Dorsolateral prefrontal cortex (tissue), 120 donors: ENCODE measurements at regions of chr15 and their contacts with region 1.

Region 1: DNA sequence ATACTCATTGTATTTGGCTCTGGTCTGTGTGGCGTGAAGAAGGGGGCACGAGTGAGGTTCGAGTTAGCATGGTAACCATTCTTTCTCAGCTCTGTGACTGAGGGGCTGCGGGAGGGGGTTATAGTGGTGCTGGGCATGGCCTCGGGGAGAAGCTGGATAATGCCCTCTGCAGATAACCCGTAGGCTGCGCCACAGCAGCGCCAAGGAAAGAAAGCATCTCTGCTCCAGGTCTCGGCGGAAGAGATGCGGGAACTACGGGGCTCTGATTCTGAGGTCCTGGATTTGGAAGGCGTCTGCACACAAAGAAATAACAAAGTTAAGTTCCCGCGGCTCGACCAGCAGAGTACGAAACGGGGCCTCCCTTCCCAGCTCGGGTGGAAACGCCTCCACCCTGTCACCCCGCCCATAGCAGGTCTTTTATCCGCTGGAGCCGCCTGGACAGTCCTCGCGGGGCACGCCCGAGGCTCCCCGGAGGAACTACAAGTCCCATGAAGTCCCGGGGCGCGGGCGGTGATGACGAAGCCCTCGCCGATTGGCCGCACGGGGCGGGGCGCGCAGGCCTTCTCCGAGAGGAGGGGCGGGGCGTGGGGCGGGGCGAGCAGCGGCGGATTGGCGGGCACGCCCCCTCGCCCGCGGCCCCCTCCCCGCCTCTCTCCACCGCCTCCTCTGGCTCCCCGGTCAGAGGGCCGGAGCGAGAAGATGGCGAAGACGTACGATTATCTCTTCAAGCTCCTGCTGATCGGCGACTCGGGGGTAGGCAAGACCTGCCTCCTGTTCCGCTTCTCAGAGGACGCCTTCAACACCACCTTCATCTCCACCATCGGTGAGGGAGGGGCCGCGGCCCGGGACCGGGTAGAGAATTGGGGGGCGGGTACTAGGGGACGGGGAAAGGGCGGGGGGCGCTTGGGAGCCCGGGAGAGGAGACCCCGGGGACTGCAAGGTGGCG is at the start of gene RAB8B:
- DNase-seq: peak; percentile 97 to 99 (median 98)
- H3K4me3 ChIP-seq: peak within 1 kb of the TSS; percentile 50 to 87 (median 75)
- H3K27ac ChIP-seq: peak within 1 kb of the TSS in 58 of 59 donors; percentile 3 to 93 (median 82)
- H3K27me3 ChIP-seq: no peaks in the 10 kb centered on the region
- CTCF ChIP-seq: peak in 27 of 56 donors; percentile 5 to 50 (median 30)
- total RNA-seq, gene RAB8B: 22.5 to 54.3 (median 36.0) TPM

Region 2: DNA sequence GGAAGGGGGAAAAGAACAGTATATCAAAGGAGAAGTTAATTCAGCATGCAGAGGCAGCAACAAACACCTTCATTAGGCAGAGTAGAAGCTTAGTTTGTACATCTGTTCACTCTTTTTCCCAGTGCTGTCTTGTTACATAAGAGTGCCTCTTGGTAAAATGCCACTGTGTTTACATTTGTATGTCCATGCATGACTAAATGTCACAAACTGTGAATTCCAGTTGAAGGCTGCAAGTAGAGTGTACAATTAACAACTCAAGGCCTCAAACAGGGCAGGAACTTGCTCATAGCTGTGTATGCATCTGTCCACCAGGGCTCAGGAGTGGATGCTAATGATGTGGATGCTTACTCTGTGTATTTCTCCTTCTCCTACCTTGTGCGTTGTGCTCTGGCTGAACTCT is 360.8 kb before region 1 on chr15:
- intact Hi-C with region 1: no loop called
- DNase-seq: no peak
- H3K4me3 ChIP-seq: no peak overlapping the region
- H3K27ac ChIP-seq: peak overlapping the region in 3 of 59 donors; percentile 8 to 31 (median 15)
- H3K27me3 ChIP-seq: no peaks in the 10 kb centered on the region
- CTCF ChIP-seq: no peak

Region 3: GRCh38 chr15:63122002-63122893 is 67.0 kb before region 1 on chr15:
- intact Hi-C with region 1: loop called in 1 of 2 experiments (anchors 10 kb)
- DNase-seq: peak; percentile 57 to 86 (median 65)
- H3K4me3 ChIP-seq: peak overlapping the region; percentile 58 to 100 (median 98)
- H3K27ac ChIP-seq: peak overlapping the region in 57 of 59 donors; percentile 13 to 95 (median 85)
- H3K27me3 ChIP-seq: no peaks in the 10 kb centered on the region
- CTCF ChIP-seq: peak in 24 of 56 donors; percentile 4 to 57 (median 27)

Region 4: DNA sequence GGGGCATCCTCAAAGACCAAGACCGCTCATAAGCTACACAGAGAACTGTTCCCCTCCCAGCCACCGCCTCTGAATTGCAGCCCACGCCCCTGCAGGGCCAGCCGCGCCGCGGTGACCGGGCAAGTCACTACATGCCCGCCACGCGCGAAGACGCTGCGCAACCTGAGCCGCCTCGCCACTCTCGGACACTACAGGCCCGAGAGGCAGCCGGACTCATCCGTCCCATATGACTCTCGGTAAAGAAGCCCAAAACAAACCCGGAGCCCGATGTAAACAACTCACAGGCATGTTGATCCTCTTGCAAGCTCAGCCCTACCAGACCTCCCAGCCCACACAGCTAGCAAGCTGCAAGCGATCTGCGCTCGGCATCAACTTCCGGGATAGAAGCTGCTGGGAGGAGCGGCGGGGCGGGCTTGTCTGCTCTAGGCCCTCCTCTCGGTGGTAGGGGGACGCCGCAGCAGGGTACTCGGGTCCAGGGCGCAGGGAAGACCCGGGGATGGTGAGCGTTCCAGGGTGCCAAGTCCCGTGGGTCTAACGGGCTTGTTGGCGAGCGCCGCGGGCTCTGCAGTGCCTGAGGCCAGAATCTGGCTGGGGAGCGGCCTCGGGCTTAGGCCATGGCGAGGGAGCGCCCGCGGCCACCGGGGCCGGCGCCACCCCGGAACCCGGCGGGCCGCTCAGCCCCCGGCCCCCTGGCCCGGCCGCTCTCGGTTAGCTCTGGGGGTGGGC is 31.9 kb before region 1 on chr15 and contains the start of gene RPS27L:
- intact Hi-C with region 1: loop called in 1 of 2 experiments (anchors 2 kb)
- DNase-seq: peak; percentile 80 to 95 (median 92)
- H3K4me3 ChIP-seq: peak within 1 kb of the TSS; percentile 51 to 99 (median 90)
- H3K27ac ChIP-seq: peak within 1 kb of the TSS; percentile 69 to 98 (median 94)
- H3K27me3 ChIP-seq: no peaks in the 10 kb centered on the region
- CTCF ChIP-seq: peak in 21 of 56 donors; percentile 4 to 35 (median 18)
- total RNA-seq, gene RPS27L: 35.0 to 86.0 (median 57.2) TPM

Region 5: DNA sequence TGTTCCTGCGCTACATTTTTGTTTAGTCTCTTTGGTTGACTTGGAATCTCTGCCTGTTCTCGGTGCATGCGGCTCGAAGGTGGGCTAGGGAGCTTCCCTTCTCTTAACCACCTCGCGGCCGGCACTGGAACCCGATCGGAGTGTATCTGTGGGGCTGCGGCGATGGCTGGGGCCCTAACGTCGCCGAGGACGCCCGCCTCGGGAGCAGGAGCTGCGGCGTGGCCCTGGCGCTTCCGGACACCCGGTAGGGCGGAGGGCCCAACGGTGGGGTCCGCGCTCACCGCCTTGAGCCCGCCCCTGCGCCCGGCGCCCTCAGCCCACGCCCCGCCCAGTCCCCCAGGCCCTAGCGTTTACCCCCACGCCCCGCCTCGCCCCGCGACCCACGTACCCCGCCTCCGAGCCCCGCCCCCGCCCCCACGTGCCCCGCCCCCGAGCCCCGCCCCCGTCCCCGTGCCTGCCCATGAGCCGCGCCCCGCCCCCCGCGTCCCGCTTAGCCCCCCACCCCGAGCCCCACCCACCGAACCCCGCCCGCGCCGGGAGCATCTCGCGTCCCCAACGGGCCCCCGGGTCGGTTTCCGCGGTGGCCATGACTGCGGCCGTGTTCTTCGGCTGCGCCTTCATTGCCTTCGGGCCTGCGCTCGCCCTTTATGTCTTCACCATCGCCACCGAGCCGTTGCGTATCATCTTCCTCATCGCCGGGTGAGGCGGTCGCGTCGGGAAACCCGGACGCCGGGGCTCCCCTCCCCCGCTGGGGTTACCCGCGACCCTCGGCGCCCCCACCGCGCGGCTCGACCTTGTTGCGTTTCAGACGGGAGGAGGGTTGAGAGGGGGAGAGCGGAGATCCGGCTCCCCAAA is 88.1 kb after region 1 on chr15 and contains the start of gene APH1B:
- intact Hi-C with region 1: loop called (anchors 2 to 5 kb)
- DNase-seq: peak; percentile 52 to 84 (median 75)
- H3K4me3 ChIP-seq: peak within 1 kb of the TSS; percentile 66 to 98 (median 90)
- H3K27ac ChIP-seq: peak within 1 kb of the TSS; percentile 60 to 97 (median 90)
- H3K27me3 ChIP-seq: no peaks in the 10 kb centered on the region
- CTCF ChIP-seq: peak in 3 of 56 donors; percentile 10 to 15 (median 13)
- total RNA-seq, gene APH1B: 12.8 to 48.9 (median 28.4) TPM

Region 6: DNA sequence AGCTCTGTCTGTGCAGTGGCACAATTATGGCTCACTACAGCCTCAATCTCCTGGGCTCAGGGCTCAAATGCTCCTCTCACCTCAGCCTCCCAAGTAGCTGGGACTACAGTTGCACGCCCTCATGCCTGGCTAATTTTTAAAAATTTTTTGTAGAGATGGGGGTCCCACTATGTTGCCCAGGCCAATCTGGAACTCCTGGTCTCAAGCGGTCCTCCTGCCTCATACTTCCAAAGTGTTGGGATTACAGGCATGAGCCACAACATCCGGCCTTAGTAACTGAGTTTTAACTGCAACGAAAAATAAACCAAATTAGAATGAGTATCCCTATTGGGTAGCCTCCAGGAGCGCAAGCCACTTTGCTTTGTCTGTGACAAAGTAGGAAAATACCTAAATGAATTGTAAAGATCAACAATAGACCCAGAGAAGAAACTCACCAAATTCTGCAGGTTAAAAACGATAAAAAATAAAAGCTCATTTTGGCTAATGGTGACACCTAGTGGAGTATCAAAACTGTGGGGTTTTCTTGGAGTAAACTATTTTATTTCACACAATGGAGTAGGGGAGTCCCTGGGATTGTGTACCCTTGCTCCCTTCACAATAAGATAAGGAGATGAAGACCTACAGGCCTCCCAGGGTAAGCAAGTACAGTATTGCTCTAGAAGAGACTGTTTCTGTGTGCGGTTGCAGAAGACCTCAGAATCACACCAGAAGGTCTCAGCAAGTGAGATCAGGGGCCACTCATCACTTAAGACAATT is 213.5 kb after region 1 on chr15:
- intact Hi-C with region 1: loop called in 1 of 2 experiments (anchors 10 kb)
- DNase-seq: no peak
- H3K4me3 ChIP-seq: no peak overlapping the region
- H3K27ac ChIP-seq: no peak overlapping the region
- H3K27me3 ChIP-seq: no peaks in the 10 kb centered on the region
- CTCF ChIP-seq: peak; percentile 38 to 83 (median 71)